Caco-2 (cell line): ENCODE measurements at regions of chr9 and their contacts with region 1.

Region 1: GRCh38 chr9:128218518-128219389 is 15.6 kb downstream of the DNM1 start:
- DNase-seq: peak; percentile 98 to 99
- H3K4me3 ChIP-seq: peak overlapping the region; percentile 44
- H3K4me3 Mint-ChIP-seq: peak overlapping the region; percentile 86
- H3K27ac Mint-ChIP-seq: peak overlapping the region; percentile 87
- H3K4me1 ChIP-seq: peaks cover 8% of the 10 kb centered on the region
- H3K4me1 Mint-ChIP-seq: peaks cover 12% of the 10 kb centered on the region
- H3K27me3 ChIP-seq: no peaks in the 10 kb centered on the region
- H3K27me3 Mint-ChIP-seq: peaks cover 3% of the 10 kb centered on the region
- CTCF ChIP-seq: no peak

Region 2: DNA sequence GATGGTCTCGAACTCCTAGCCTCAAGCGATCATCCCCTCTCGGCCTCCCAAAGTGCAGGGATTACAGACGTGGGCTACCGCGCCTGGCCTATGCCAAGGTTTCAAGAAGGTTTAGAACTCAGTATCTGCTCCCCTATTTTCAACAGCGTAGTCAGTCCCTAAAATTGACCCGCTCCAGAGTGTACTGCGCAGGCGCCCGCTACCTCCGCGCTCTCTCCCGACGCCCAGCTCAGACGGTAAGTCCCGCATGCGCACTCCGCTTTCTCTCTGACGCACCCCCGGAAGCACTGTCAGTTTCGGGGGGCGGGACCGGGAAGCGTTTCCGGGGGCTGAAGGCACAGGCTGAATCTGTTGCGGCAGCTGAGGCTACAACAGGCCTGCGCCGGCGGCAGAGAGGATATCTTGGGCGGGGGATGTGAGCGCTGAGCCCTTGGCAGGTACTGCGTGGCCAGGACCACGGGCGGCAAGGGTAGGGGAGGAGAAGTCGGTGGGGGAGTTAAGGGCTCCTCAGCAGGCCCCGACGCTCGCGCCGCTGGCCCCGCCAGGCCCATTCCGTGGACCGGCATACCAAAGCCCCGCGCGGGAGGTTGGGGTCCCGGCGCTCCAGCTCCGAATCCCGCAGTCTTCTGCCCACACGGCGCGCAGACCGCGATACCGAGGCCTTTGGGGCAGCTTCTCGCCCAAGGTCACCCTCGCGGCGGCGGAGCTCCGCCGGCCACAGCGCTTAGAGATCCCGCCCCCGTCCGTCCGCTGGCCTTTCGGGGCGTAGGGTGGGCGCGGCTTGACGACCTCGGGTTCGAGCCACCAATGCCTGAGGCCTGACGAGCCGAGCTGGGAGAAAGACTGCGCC is 1413.8 kb before region 1 on chr9 and contains the start of gene ZBTB43:
- CTCF ChIA-PET with region 1: no interaction called
- POLR2A ChIA-PET with region 1: no interaction called
- intact Hi-C with region 1: no loop called
- DNase-seq: peak; percentile 97
- H3K4me3 ChIP-seq: peak within 1 kb of the TSS; percentile 89
- H3K4me3 Mint-ChIP-seq: peak within 1 kb of the TSS; percentile 85
- H3K27ac Mint-ChIP-seq: peak within 1 kb of the TSS; percentile 91
- H3K4me1 ChIP-seq: peaks cover 5% of the 10 kb centered on the region; the same call in 1 of the 2 replicates
- H3K4me1 Mint-ChIP-seq: peaks cover 25% of the 10 kb centered on the region
- H3K27me3 ChIP-seq: no peaks in the 10 kb centered on the region
- H3K27me3 Mint-ChIP-seq: no peaks in the 10 kb centered on the region
- CTCF ChIP-seq: no peak
- total RNA-seq, gene ZBTB43: 17.7 and 18.5 TPM in 2 replicates

Region 3: DNA sequence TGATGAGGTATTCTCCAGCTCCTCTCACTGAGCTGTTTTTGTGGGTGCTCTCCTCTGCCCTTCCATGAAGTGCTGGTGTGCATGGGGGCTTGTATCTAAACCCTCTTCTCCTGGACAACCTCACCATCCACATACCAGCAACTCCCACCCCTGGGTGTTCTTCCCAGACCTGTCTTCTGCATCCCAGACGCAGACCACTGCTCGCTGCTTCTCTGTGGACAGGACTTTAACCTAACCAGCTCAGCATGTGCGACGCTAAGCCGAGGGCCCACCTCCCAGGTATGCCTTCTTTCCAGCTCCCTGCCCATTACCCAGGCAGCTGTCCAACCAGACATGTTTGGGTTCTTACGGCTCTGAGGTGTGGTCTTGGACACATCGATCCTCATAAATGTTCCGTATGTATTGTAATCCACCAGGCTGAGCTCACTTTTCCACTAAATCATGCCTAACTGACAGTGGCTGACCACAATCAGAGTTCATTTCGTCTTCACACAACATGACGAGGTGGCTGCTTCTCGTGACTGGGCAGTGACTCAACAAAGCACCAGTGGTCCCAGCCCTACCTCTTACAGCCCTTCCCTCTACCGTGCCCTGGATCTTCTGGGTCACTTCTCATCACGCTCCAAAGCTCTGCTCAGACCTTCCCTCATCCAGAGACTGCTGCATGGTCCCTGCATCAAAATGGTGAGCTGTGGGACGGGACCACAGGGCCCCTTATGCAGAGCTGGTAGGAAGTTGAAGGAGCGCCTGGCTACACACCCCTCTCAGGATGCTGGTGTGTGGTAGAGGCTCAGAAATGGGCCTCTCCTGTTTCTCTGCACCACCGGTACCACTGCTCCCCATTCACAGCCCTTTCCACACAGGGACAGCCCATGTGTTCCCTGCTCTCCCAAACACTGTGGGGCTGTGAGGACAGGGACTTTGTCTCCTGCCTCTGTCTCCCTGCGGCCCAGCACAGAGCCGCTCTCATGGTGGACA is 81.6 kb before region 1 on chr9:
- CTCF ChIA-PET with region 1: no interaction called
- POLR2A ChIA-PET with region 1: no interaction called
- intact Hi-C with region 1: no loop called
- DNase-seq: peak in 1 of 2 experiments; percentile 14
- H3K4me3 ChIP-seq: no peak overlapping the region
- H3K4me3 Mint-ChIP-seq: no peak overlapping the region
- H3K27ac Mint-ChIP-seq: no peak overlapping the region
- H3K4me1 ChIP-seq: no peaks in the 10 kb centered on the region
- H3K4me1 Mint-ChIP-seq: no peaks in the 10 kb centered on the region
- H3K27me3 ChIP-seq: no peaks in the 10 kb centered on the region
- H3K27me3 Mint-ChIP-seq: no peaks in the 10 kb centered on the region
- CTCF ChIP-seq: no peak

Region 4: GRCh38 chr9:128203024-128203706 is 15.6 kb before region 1 on chr9 and contains the start of gene DNM1:
- CTCF ChIA-PET with region 1: interaction called, 6 read pairs
- POLR2A ChIA-PET with region 1: interaction called, 5 read pairs
- intact Hi-C with region 1: loop called (anchors 1 kb)
- DNase-seq: peak; percentile 49 to 78
- H3K4me3 ChIP-seq: peak within 1 kb of the TSS; percentile 68
- H3K4me3 Mint-ChIP-seq: peak within 1 kb of the TSS; percentile 68
- H3K27ac Mint-ChIP-seq: no peak within 1 kb of the TSS
- H3K4me1 ChIP-seq: peaks cover 6% of the 10 kb centered on the region; the same call in 1 of the 2 replicates
- H3K4me1 Mint-ChIP-seq: peaks cover 16% of the 10 kb centered on the region
- H3K27me3 ChIP-seq: no peaks in the 10 kb centered on the region
- H3K27me3 Mint-ChIP-seq: peaks cover 5% of the 10 kb centered on the region
- CTCF ChIP-seq: peak; percentile 8 to 88
- total RNA-seq, gene DNM1: 3.9 and 5.2 TPM in 2 replicates

Region 5: DNA sequence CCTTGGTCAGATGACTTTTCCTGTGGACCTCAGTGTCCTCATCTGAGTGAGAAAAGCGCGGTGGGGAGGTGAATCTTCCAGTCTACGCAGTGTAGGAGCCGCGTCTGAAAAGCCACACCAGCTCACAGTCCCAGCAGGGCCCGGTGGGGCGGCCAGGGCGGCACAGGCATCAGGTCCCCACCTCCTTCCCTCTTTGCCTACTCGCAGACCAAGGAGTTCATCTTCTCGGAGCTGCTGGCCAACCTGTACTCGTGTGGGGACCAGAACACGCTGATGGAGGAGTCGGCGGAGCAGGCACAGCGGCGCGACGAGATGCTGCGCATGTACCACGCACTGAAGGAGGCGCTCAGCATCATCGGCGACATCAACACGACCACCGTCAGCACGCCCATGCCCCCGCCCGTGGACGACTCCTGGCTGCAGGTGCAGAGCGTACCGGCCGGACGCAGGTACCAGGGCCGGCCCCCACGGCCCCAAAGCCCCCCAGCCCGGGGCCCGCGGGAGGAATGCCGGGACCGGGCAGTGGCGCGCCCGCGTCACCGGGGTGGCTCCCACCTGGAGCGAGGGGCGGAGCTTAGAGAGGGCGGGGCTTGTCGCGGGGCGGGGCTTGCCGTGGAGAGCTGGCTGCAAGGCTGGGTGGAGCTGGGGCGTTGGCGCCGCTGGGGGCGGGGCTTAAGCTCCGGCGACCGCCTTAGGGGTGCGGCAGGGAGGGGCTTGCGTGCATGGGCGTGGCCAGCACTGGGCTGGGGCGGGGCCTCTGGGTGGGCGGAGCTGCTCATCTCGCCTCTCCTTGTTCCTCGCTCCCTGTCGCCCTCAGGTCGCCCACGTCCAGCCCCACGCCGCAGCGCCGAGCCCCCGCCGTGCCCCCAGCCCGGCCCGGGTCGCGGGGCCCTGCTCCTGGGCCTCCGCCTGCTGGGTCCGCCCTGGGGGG is 31.4 kb after region 1 on chr9:
- CTCF ChIA-PET with region 1: interaction called, 9 read pairs
- POLR2A ChIA-PET with region 1: interaction called, 7 read pairs
- intact Hi-C with region 1: loop called (anchors 1 kb)
- DNase-seq: peak; percentile 97 to 99
- H3K4me3 ChIP-seq: peak overlapping the region; percentile 73
- H3K4me3 Mint-ChIP-seq: peak overlapping the region; percentile 75
- H3K27ac Mint-ChIP-seq: no peak overlapping the region
- H3K4me1 ChIP-seq: peaks cover 7% of the 10 kb centered on the region; the same call in 1 of the 2 replicates
- H3K4me1 Mint-ChIP-seq: peaks cover 13% of the 10 kb centered on the region
- H3K27me3 ChIP-seq: no peaks in the 10 kb centered on the region
- H3K27me3 Mint-ChIP-seq: no peaks in the 10 kb centered on the region
- CTCF ChIP-seq: no peak

Region 6: GRCh38 chr9:128275996-128276573 is 57.3 kb after region 1 on chr9 and contains the starts of genes GOLGA2 and SWI5:
- CTCF ChIA-PET with region 1: no interaction called
- POLR2A ChIA-PET with region 1: interaction called, 3 read pairs
- intact Hi-C with region 1: loop called (anchors 1 kb)
- DNase-seq: peak; percentile 99 to 100
- H3K4me3 ChIP-seq: peak within 1 kb of the TSS; percentile 88
- H3K4me3 Mint-ChIP-seq: peak within 1 kb of the TSS; percentile 98
- H3K27ac Mint-ChIP-seq: peak within 1 kb of the TSS; percentile 97
- H3K4me1 ChIP-seq: peaks cover 5% of the 10 kb centered on the region
- H3K4me1 Mint-ChIP-seq: peaks cover 30% of the 10 kb centered on the region
- H3K27me3 ChIP-seq: no peaks in the 10 kb centered on the region
- H3K27me3 Mint-ChIP-seq: peaks cover 2% of the 10 kb centered on the region
- CTCF ChIP-seq: no peak
- total RNA-seq, gene GOLGA2: 97.7 and 102 TPM in 2 replicates
- total RNA-seq, gene SWI5: 18.0 and 19.8 TPM in 2 replicates

Region 7: GRCh38 chr9:128393171-128393775 is 174.5 kb after region 1 on chr9:
- CTCF ChIA-PET with region 1: no interaction called
- POLR2A ChIA-PET with region 1: no interaction called
- intact Hi-C with region 1: no loop called
- DNase-seq: no peak
- H3K4me3 ChIP-seq: no peak overlapping the region
- H3K4me3 Mint-ChIP-seq: no peak overlapping the region
- H3K27ac Mint-ChIP-seq: no peak overlapping the region
- H3K4me1 ChIP-seq: 0 out of 2 replicates have a peak, but pooled peaks cover 5% of the 10 kb centered on the region
- H3K4me1 Mint-ChIP-seq: no peaks in the 10 kb centered on the region
- H3K27me3 ChIP-seq: no peaks in the 10 kb centered on the region
- H3K27me3 Mint-ChIP-seq: no peaks in the 10 kb centered on the region
- CTCF ChIP-seq: no peak